HAP-1 (cell line): ENCODE measurements at regions of chr10 and their contacts with region 1.

Region 1: DNA sequence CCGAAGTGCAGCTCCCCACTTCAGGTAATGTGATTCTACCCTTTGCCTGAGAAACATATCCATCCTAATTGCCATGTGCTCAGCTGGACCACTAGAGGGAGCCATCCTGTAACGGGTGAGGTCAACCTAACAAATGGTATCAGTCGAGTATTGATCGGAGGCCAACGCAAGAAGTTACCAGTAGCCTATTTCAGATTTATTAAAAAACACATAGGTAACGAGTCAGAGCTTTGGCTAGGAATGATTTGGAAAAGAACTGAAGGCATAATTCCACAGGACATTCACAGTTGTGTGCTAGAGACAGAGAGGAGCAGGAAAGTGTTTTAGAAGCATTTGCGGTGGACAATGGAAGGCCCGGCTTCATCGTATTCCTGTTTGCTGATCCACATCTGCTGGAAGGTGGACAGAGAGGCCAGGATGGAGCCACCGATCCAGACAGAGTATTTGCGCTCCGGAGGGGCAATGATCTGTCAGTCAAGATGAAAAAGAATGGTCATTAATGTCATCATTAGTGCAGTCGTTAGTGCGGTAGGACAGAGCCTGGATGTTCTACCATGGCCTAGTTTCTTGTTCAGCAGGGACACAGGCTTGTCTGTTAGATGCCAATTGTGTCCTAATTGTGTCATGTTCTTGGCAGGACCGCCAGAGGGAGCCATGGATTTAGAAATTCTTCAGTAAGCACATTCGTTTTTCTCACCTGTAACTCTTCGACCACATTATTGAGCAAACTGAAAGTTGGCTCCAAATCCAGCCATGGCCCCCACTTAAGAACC is 17.5 kb downstream of the ACTA2 start:
- DNase-seq: peak; percentile 76 to 83
- H3K4me3 ChIP-seq: no peak overlapping the region
- H3K4me1 ChIP-seq: peaks cover 6% of the 10 kb centered on the region; the same call in 1 of the 2 replicates
- H3K27me3 ChIP-seq: no peaks in the 10 kb centered on the region

Region 2: GRCh38 chr10:88835096-88835909 is 99.8 kb before region 1 on chr10:
- in situ Hi-C with region 1: loop called (anchors 5 kb)
- DNase-seq: peak; percentile 81 to 89
- H3K4me3 ChIP-seq: no peak overlapping the region
- H3K4me1 ChIP-seq: no peaks in the 10 kb centered on the region
- H3K27me3 ChIP-seq: peaks cover 7% of the 10 kb centered on the region; the same call in 1 of the 2 replicates

Region 3: DNA sequence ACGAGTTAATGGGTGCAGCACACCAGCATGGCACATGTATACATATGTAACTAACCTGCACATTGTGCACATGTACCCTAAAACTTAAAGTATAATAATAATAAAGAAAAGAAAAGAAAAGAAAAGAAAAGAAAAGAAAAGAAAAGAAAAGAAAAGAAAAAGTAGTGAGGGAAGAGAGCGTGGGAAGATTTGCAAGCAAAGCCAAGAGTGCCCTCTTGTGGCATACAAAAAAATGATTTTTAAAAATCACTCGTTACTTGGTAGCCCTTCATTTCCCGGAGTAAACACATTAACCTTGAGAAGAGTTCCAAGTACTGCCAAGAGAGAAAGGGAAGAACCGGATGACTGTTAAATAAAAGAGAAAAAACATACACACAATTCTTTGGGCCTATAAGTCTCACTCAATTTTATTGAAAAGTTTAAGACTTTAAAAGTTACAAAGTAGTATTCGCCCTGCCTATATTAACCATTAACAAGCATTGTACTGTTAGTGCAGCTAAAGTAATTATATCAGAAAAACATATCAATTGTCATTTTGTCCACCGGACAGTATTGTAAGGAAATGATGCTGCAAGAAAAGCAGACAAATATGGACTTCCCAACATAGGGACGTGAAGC is 278.2 kb after region 1 on chr10:
- in situ Hi-C with region 1: loop called (anchors 5 kb)
- DNase-seq: peak in 1 of 2 experiments; percentile 55
- H3K4me3 ChIP-seq: no peak overlapping the region
- H3K4me1 ChIP-seq: no peaks in the 10 kb centered on the region
- H3K27me3 ChIP-seq: no peaks in the 10 kb centered on the region